ENCODE measurements at regions of chr11 and their contacts with region 1.

Region 1: DNA sequence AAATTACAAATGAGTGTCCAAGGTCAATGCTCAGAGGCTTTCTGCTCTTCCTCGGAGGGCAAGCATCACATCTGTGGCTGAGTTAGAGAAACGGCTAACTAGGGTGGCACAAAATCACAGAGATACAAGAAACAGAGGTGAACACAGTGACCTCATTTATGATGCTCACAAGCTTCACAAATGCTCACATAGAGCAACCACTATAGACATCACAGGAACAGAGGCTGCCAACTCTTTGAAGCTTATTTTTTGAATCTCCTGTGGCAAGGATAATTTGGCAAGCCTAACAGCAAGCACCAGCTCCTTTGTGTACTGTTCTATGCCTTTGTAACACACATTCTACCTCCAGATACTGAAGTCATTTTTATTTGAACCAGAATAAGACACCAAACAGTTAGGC is 416.5 kb upstream of the DDI1 start:
- DNase-seq: no peak
- H3K4me3 ChIP-seq: no peak overlapping the region
- H3K27ac ChIP-seq: no peak overlapping the region
- H3K4me1 ChIP-seq: no peaks in the 10 kb centered on the region
- H3K27me3 ChIP-seq: no peaks in the 10 kb centered on the region
- CTCF ChIP-seq: no peak
- EP300 ChIP-seq: no peak
- POLR2A ChIP-seq: no peak

Region 2: DNA sequence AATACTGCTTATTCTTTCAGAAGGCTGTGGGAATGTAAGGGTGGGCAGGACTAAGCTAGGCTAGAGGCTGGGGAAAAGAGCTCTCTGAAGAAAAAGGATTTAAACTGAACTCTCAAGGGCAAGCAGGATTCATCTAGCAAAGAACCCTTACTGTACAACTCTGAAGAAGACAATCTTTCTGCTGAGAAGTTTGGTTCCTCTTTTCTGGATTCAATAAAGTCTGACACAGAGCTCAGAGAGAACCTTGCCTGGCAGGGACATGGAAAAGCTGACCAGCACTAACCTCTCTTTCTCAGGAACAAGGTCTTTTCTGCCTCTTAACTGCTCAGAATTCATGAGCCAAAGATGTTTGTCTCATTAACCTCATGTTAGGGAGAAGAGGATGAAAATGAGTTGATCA is 28.1 kb after region 1 on chr11:
- in situ Hi-C with region 1: no loop called
- intact Hi-C with region 1: loop called (anchors 1 kb)
- DNase-seq: no peak
- H3K4me3 ChIP-seq: no peak overlapping the region
- H3K27ac ChIP-seq: no peak overlapping the region
- H3K4me1 ChIP-seq: no peaks in the 10 kb centered on the region
- H3K27me3 ChIP-seq: no peaks in the 10 kb centered on the region
- CTCF ChIP-seq: no peak
- EP300 ChIP-seq: no peak
- POLR2A ChIP-seq: no peak

Region 3: GRCh38 chr11:103700622-103701021 is 80.7 kb after region 1 on chr11:
- in situ Hi-C with region 1: no loop called
- intact Hi-C with region 1: no loop called
- DNase-seq: no peak
- H3K4me3 ChIP-seq: no peak overlapping the region
- H3K27ac ChIP-seq: no peak overlapping the region
- H3K4me1 ChIP-seq: no peaks in the 10 kb centered on the region
- H3K27me3 ChIP-seq: no peaks in the 10 kb centered on the region
- CTCF ChIP-seq: no peak
- EP300 ChIP-seq: no peak
- POLR2A ChIP-seq: no peak

Region 4: DNA sequence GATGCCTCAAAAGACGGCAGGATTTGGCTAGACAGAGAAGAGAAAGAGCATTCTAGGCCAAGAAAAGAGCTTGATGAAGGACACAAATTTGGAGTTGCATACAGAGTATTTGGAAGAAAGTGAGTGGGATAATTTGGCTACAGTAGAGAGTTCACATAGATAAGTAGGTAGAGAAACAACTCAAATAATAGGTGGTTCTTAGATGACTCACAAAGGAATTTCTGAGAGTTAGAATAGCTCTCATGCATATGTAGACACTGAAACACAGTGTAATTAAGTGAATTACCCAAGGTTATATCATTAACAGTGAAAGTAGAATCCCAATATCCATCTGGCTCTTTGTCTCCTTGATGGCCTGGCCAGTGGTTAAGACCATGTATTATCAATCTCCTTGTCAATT is 187.9 kb after region 1 on chr11:
- in situ Hi-C with region 1: no loop called
- intact Hi-C with region 1: no loop called
- DNase-seq: no peak
- H3K4me3 ChIP-seq: no peak overlapping the region
- H3K27ac ChIP-seq: no peak overlapping the region
- H3K4me1 ChIP-seq: peaks cover 0 to 21% (median 7%) of the 10 kb centered on the region in 4 donors
- H3K27me3 ChIP-seq: no peaks in the 10 kb centered on the region
- CTCF ChIP-seq: no peak
- EP300 ChIP-seq: no peak
- POLR2A ChIP-seq: no peak

Region 5: GRCh38 chr11:104731890-104732289 is 1112.0 kb after region 1 on chr11:
- in situ Hi-C with region 1: no loop called
- intact Hi-C with region 1: no loop called
- DNase-seq: no peak
- H3K4me3 ChIP-seq: no peak overlapping the region
- H3K27ac ChIP-seq: no peak overlapping the region
- H3K4me1 ChIP-seq: no peaks in the 10 kb centered on the region
- H3K27me3 ChIP-seq: no peaks in the 10 kb centered on the region
- CTCF ChIP-seq: no peak
- EP300 ChIP-seq: no peak
- POLR2A ChIP-seq: no peak